ENCODE measurements at regions of chr18 and their contacts with region 1.

Region 1: DNA sequence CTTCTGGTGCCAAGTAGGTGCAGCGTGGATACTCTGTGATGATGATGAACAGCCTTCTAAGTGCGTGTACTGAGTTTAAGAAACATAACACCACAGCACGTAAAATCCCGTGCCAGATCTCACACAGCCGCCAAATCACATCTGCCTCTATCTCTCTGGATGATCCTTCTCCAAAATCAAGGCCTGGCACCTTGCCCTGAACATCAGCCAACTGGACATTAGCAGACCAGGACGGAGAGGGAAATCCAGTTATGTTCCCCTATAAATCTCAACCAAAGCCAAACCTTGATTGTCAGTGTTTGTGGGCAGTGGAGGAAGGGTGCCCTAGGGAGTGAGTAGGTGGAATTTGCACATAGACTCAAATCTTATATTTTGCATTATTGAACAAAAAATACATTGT is 164.3 kb downstream of the MIB1 start:
- DNase-seq: no peak
- CTCF ChIP-seq: no peak

Region 2: DNA sequence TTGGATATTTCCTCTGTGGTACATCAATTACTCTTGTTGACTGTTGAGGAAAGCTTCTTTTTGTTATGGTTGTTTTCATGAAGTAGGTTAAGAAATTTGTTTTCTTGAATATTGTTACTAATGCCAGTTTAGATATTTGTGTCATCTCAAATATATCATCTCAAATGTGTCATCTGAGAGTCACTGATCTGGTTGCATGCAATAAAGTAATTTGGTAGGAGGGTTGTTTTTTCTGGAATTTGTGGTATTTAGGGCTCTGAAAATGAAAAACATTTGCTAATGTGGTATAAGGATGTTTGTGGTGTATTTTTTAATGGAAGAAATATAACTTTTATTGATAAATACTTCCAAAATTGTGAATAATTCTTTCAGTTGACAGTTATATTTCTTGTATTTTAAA is 545.1 kb before region 1 on chr18:
- in situ Hi-C with region 1: no loop called
- DNase-seq: no peak
- CTCF ChIP-seq: no peak

Region 3: GRCh38 chr18:21980744-21981143 is 75.9 kb after region 1 on chr18:
- in situ Hi-C with region 1: loop called (anchors 10 kb)
- DNase-seq: no peak
- CTCF ChIP-seq: no peak

Region 4: DNA sequence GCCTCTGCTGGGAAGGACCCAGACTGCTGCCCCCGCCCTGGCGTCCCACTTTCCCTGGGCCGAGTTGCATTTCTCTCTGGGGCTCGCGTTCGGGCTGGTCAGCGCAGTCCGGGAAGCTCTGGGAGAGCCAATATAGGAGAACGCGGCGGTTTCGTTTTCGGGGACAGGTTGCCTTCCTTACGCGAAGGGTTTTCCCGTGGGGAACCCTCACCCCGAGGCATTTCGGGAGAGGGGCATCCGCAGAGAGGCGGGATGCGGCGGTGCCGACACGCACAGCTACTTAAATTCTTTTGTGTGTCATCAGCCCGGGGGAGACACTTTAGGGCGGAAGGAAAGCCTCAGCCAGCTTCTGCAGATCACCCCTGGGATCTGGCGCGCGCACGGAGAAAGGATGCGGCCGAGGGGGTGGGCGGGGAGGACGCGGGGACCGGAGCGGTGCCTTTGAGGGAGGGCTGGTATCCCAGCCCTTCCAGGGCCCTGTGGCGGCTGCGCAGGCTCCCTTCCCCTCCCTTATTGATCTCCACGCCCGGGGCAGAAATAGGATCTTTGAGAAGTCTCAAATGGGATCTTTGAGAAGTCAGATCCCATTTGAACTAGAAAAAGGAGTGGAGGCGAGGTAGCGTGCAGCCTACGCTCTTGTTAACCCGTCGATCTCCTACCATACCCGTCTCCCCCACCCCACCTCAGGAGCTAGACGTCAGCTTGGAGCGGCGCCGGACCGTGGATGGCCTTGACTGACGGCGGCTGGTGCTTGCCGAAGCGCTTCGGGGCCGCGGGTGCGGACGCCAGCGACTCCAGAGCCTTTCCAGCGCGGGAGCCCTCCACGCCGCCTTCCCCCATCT is 265.8 kb after region 1 on chr18:
- in situ Hi-C with region 1: no loop called
- DNase-seq: peak; percentile 43
- CTCF ChIP-seq: no peak